CD8-positive, alpha-beta T cell (primary cell): ENCODE measurements at regions of chr17 and their contacts with region 1.

Region 1: DNA sequence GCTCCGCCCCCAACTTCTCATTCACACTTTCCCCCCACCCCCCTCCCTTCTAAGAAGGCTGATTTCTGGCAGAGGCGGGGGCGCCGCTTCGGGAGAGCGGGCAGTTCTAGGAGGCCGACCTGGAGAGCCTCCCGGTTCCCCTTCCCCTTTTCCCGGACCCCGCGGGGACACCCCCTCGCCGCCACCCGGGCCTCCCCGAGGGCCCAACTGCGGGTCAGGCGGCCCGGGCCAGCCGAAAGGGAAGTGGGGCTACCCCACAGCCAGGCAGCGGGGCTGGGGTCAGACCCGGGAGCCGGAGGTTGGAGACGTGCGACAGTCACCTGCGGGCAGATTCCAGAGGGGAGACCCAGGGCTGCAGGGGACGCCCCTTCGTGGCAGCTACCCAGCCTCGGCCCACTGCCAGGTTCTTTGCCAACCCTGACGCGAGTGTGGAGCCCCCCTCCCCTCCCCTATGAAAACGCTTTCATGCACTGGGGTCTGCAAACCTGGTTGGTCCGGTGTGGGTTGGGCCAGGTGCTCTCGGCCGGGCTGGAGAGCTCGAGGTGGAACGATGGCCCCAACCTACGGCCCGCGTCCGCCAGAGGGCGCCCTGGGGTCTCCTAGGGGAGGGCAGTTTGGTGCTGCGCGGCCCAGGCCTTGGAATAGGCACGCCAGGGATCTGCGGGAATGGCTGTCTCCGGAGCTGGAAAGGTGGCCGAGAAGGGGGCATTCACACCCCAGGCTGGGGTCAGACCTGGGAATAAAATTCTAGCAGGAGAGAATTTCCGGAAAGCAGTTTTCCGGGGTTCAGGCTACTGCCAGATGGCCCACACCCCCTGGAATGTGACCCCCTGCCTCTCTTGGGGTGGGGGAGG is 721 bp upstream of the SOCS3 start:
- DNase-seq: peak; percentile 79 to 95 (median 87)
- ATAC-seq: no peak
- H3K4me3 ChIP-seq: peak overlapping the region; percentile 56 to 64
- H3K4me3 Mint-ChIP-seq: peak overlapping the region; percentile 88
- H3K27ac ChIP-seq: peak overlapping the region; percentile 6 to 62
- H3K27ac Mint-ChIP-seq: peak overlapping the region; percentile 87
- H3K4me1 ChIP-seq: peaks cover 31% of the 10 kb centered on the region
- H3K4me1 Mint-ChIP-seq: peaks cover 43% of the 10 kb centered on the region
- H3K27me3 ChIP-seq: no peaks in the 10 kb centered on the region
- H3K27me3 Mint-ChIP-seq: no peaks in the 10 kb centered on the region
- CTCF ChIP-seq: peak; percentile 84

Region 2: GRCh38 chr17:78040440-78041385 is 319.9 kb before region 1 on chr17:
- CTCF ChIA-PET with region 1: no interaction called
- POLR2A ChIA-PET with region 1: no interaction called
- intact Hi-C with region 1: no loop called
- DNase-seq: peak in 8 of 9 experiments; percentile 10 to 64 (median 33)
- ATAC-seq: peak; percentile 77
- H3K4me3 ChIP-seq: peak overlapping the region; percentile 16 to 22
- H3K4me3 Mint-ChIP-seq: peak overlapping the region; percentile 57
- H3K27ac ChIP-seq: peak overlapping the region in 1 of 2 experiments; percentile 9
- H3K27ac Mint-ChIP-seq: peak overlapping the region; percentile 83
- H3K4me1 ChIP-seq: peaks cover 19% of the 10 kb centered on the region
- H3K4me1 Mint-ChIP-seq: peaks cover 61% of the 10 kb centered on the region
- H3K27me3 ChIP-seq: no peaks in the 10 kb centered on the region
- H3K27me3 Mint-ChIP-seq: no peaks in the 10 kb centered on the region
- CTCF ChIP-seq: no peak

Region 3: DNA sequence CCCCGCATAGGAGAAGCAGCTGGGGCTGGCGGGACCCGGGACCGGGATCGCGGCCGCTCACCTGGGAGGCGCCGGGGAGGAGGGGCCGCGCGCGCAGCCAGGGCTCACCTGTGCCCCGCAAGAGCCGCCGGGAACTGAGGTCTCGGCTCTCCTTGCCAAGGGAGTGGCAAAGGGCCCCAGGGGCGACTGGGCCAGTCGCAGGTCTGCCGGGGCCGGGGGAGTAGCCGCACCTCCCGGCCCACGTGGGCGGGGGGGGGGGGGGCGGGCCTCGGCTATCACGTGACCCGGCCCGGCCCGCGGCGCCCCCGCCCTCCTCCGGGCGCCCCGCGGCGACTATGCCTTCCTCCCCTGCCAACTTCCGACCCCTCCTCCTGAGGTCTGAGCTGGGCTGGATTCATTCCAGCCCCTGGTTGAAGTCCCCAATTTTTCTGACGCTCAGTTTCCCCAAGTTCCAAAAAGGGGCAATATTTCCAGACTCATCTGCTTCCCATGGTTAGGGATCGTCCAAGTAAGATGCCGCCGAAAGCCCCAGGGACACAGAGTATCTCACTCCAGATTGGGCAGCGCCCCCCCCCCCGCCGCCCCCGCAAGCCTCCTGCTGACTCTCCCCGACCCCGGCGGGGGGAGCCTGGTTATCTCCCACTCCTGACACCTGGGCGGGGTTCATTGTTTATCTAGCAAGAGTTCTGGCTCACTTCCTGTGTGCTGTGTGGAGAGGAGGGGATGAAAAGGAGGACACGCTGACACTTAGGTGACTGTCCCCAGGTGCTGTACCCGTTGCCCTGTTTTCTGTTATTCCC is 231.8 kb before region 1 on chr17 and contains the start of gene TMC6:
- CTCF ChIA-PET with region 1: no interaction called
- POLR2A ChIA-PET with region 1: interaction called, 4 read pairs
- intact Hi-C with region 1: loop called in 1 of 2 experiments (anchors 2 kb)
- DNase-seq: peak; percentile 52 to 91 (median 82)
- ATAC-seq: peak; percentile 25
- H3K4me3 ChIP-seq: peak within 1 kb of the TSS; percentile 95 to 97
- H3K4me3 Mint-ChIP-seq: peak within 1 kb of the TSS; percentile 92
- H3K27ac ChIP-seq: peak within 1 kb of the TSS; percentile 74 to 80
- H3K27ac Mint-ChIP-seq: peak within 1 kb of the TSS; percentile 98
- H3K4me1 ChIP-seq: peaks cover 59% of the 10 kb centered on the region
- H3K4me1 Mint-ChIP-seq: peaks cover 53% of the 10 kb centered on the region
- H3K27me3 ChIP-seq: no peaks in the 10 kb centered on the region
- H3K27me3 Mint-ChIP-seq: no peaks in the 10 kb centered on the region
- CTCF ChIP-seq: no peak
- total RNA-seq, gene TMC6: 518 to 535 TPM

Region 4: DNA sequence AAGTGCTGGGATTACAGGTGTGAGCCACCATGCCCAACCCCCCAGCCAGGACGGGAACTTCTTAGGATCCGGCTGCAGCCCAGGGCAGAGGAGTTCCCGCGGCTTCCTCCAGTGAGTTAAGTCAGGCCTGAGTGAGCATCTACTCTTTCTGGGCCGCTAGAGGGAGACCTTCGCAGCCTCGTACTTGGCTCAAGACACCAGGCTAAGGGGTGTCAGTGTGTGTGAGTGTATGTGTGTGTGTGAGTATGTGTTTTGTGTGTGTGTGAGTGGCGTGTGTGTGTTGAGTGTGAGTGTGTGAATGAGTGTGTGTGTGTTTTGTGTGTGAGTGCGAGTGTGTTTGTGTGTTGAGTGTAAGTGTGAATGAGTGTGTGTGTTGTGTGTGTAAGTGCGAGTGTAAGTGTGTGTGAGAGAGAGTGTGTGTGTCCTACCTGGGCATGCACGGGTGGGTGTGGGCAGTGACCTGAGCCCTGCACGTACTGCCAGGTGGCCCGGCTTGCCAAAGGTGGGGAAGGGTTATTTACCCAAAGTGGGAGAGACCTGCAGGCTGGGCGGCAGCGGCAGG is 70.7 kb before region 1 on chr17:
- CTCF ChIA-PET with region 1: interaction called, 32 read pairs
- POLR2A ChIA-PET with region 1: no interaction called
- intact Hi-C with region 1: loop called (anchors 1 kb)
- DNase-seq: peak; percentile 49 to 89 (median 77)
- ATAC-seq: peak; percentile 99
- H3K4me3 ChIP-seq: no peak overlapping the region
- H3K4me3 Mint-ChIP-seq: no peak overlapping the region
- H3K27ac ChIP-seq: no peak overlapping the region
- H3K27ac Mint-ChIP-seq: no peak overlapping the region
- H3K4me1 ChIP-seq: peaks cover 9% of the 10 kb centered on the region
- H3K4me1 Mint-ChIP-seq: peaks cover 4% of the 10 kb centered on the region
- H3K27me3 ChIP-seq: no peaks in the 10 kb centered on the region
- H3K27me3 Mint-ChIP-seq: no peaks in the 10 kb centered on the region
- CTCF ChIP-seq: peak; percentile 68

Region 5: DNA sequence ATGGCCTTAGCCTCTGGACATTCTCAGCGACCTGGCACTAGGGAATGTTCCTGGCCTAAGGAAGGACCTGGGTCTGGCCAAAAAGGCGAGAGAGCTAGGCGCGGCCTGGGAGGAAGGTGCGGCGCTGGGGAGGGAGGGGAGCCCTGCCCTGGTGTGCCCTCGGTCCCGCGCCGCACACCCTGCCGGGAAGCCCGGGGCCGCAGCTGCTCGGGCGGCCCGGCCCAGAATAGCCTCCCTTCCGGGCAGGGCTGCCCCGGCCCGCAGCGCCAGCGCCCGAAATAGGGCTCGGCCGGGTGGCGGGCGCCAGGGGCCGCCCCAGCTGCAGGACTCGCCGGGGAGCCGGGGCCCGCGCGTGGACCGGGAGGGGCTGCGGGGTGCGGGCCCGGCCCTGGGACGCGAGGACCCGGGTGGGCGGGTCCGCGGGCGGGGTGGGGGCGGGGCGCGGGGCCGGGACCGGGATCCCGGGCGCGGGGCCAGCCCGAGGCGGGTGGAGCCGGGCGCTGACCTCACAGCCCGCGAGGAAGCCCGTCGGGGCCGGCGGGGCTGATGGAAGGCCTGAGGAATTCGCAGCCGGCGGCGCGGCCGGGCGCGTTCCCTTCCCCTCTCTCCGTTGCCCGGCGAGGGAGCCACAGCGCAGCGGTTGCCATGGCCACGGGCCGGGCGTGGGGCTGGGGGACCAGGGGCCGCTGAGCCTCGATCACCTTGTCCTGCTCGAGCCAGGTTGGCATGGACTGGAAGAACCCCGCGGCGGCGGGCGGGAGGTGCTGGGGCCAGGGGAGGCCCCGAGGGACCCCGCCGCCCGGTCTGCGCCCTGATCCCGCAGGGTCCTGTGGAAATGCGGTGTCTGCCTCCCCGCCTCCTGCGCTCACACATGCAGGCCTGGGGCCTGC is 18.8 kb before region 1 on chr17:
- CTCF ChIA-PET with region 1: interaction called, 52 read pairs
- POLR2A ChIA-PET with region 1: interaction called, 19 read pairs
- intact Hi-C with region 1: loop called (anchors 1 kb)
- DNase-seq: peak in 2 of 9 experiments; percentile 56 to 59
- ATAC-seq: no peak
- H3K4me3 ChIP-seq: peak overlapping the region in 1 of 2 experiments; percentile 37
- H3K4me3 Mint-ChIP-seq: peak overlapping the region; percentile 61
- H3K27ac ChIP-seq: no peak overlapping the region
- H3K27ac Mint-ChIP-seq: no peak overlapping the region
- H3K4me1 ChIP-seq: peaks cover 53% of the 10 kb centered on the region
- H3K4me1 Mint-ChIP-seq: peaks cover 61% of the 10 kb centered on the region
- H3K27me3 ChIP-seq: peaks cover 0 to 3% of the 10 kb centered on the region in 2 experiments
- H3K27me3 Mint-ChIP-seq: no peaks in the 10 kb centered on the region
- CTCF ChIP-seq: no peak

Region 6: GRCh38 chr17:78378225-78379130 is 17.9 kb after region 1 on chr17 and contains the start of gene PGS1:
- CTCF ChIA-PET with region 1: interaction called, 23 read pairs
- POLR2A ChIA-PET with region 1: interaction called, 5 read pairs
- intact Hi-C with region 1: loop called (anchors 1 kb)
- DNase-seq: peak; percentile 60 to 92 (median 83)
- ATAC-seq: peak; percentile 51
- H3K4me3 ChIP-seq: peak within 1 kb of the TSS; percentile 70 to 91
- H3K4me3 Mint-ChIP-seq: peak within 1 kb of the TSS; percentile 95
- H3K27ac ChIP-seq: peak within 1 kb of the TSS; percentile 64 to 70
- H3K27ac Mint-ChIP-seq: peak within 1 kb of the TSS; percentile 88
- H3K4me1 ChIP-seq: peaks cover 50% of the 10 kb centered on the region
- H3K4me1 Mint-ChIP-seq: peaks cover 43% of the 10 kb centered on the region
- H3K27me3 ChIP-seq: no peaks in the 10 kb centered on the region
- H3K27me3 Mint-ChIP-seq: no peaks in the 10 kb centered on the region
- CTCF ChIP-seq: no peak
- total RNA-seq, gene PGS1: 34.6 to 36.3 TPM